ENCODE measurements at regions of chr5 and their contacts with region 1.

Region 1: GRCh38 chr5:169302491-169303118 is 1.7 kb upstream of the SLIT3 start:
- ATAC-seq: peak in 6 of 8 experiments; percentile 4 to 37 (median 24)
- H3K4me3 ChIP-seq: no peak overlapping the region
- H3K27ac ChIP-seq: no peak overlapping the region
- H3K4me1 ChIP-seq: peaks cover 6 to 11% of the 10 kb centered on the region in 2 donors

Region 2: DNA sequence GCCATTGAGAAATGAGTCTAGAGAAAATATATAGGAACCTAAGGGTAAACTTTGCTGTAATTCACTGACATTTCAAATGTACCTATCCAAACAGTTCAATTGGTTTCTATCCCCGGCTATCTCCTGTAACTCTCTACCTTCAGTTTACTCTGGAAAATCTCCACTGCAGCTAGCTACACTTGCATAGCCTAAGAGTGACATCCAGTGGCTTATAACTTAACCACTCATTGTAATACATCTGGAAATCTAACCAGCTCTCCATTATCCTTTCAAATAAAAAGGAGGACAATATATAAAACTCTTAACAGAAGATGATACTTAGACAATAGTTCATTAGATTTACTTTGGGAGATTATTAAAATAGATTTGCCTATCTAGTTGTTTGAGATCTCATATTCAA is 245.7 kb after region 1 on chr5:
- in situ Hi-C with region 1: loop called in 1 of 9 experiments (anchors 25 kb)
- ATAC-seq: peak in 4 of 8 experiments; percentile 49 to 86 (median 82)
- H3K4me3 ChIP-seq: no peak overlapping the region
- H3K27ac ChIP-seq: no peak overlapping the region
- H3K4me1 ChIP-seq: no peaks in the 10 kb centered on the region

Measured in motor neuron (in vitro differentiated cells).